ENCODE measurements at regions of chr11 and their contacts with region 1.

Region 1: GRCh38 chr11:12288212-12288930 is 89.0 kb upstream of the PARVA start:
- DNase-seq: peak; percentile 64
- H3K4me3 ChIP-seq: no peak overlapping the region
- H3K27me3 ChIP-seq: no peaks in the 10 kb centered on the region
- CTCF ChIP-seq: peak; percentile 98

Region 2: GRCh38 chr11:12251666-12252560 is 36.5 kb before region 1 on chr11:
- CTCF ChIA-PET with region 1: no interaction called
- POLR2A ChIA-PET with region 1: no interaction called
- DNase-seq: no peak
- H3K4me3 ChIP-seq: no peak overlapping the region
- H3K27me3 ChIP-seq: no peaks in the 10 kb centered on the region
- CTCF ChIP-seq: no peak

Region 3: DNA sequence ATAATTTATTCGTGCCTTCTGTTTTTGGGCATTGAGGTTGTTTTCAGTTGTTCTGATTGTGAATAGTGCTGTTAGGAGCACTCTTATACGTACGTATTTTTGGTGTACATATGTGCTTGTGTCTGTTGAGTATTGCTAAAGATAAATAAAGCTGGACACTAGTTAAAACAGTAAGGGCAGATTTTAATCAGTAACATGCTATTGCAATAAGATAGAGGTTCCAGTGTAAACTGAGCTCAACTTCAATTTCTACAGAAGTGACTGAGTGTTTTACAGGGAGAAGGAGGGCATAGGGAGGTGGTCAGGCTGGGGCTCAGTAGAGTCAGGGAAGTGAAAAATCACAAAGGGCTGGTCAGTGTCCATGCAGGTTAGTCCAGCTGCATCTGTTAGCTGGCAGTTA is 13.0 kb after region 1 on chr11:
- CTCF ChIA-PET with region 1: interaction called, 18 read pairs
- POLR2A ChIA-PET with region 1: no interaction called
- DNase-seq: no peak
- H3K4me3 ChIP-seq: no peak overlapping the region
- H3K27me3 ChIP-seq: no peaks in the 10 kb centered on the region
- CTCF ChIP-seq: no peak

Region 4: DNA sequence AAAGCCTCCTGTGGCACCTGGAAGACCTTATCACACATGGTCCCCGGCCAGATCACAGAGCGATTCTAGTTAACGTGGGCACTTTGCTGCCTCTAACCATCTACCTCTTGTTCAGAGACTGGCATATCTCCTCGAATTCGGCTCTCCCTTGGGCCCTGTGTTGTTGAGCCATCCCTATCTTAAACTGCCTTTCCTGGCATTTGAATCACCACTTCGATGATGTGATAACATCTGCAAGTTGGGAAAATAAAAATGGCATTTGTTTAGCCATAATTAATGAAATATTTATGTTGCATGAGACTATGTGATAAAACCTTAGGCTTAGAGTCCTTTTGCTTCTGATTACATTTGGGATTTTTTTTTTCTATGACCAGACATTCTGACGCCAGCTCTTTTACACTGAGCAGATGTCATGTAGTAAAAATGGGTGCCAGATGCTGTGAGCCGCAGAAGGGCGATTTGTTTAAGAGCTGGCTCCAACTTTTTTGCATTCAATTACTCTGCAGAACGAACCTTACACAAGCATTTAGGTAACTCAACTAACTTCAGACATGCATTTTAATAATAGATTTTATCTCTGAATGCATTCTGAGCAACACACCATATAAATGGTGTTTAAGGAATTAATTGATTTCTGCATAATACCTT is 30.5 kb after region 1 on chr11:
- CTCF ChIA-PET with region 1: interaction called, 16 read pairs
- POLR2A ChIA-PET with region 1: no interaction called
- DNase-seq: peak; percentile 84
- H3K4me3 ChIP-seq: no peak overlapping the region
- H3K27me3 ChIP-seq: no peaks in the 10 kb centered on the region; the same call in 1 of the 2 replicates
- CTCF ChIP-seq: no peak

Region 5: GRCh38 chr11:12331239-12331874 is 43.0 kb after region 1 on chr11:
- CTCF ChIA-PET with region 1: interaction called, 68 read pairs
- POLR2A ChIA-PET with region 1: interaction called, 8 read pairs
- DNase-seq: peak; percentile 40
- H3K4me3 ChIP-seq: no peak overlapping the region
- H3K27me3 ChIP-seq: no peaks in the 10 kb centered on the region
- CTCF ChIP-seq: peak; percentile 69

Region 6: DNA sequence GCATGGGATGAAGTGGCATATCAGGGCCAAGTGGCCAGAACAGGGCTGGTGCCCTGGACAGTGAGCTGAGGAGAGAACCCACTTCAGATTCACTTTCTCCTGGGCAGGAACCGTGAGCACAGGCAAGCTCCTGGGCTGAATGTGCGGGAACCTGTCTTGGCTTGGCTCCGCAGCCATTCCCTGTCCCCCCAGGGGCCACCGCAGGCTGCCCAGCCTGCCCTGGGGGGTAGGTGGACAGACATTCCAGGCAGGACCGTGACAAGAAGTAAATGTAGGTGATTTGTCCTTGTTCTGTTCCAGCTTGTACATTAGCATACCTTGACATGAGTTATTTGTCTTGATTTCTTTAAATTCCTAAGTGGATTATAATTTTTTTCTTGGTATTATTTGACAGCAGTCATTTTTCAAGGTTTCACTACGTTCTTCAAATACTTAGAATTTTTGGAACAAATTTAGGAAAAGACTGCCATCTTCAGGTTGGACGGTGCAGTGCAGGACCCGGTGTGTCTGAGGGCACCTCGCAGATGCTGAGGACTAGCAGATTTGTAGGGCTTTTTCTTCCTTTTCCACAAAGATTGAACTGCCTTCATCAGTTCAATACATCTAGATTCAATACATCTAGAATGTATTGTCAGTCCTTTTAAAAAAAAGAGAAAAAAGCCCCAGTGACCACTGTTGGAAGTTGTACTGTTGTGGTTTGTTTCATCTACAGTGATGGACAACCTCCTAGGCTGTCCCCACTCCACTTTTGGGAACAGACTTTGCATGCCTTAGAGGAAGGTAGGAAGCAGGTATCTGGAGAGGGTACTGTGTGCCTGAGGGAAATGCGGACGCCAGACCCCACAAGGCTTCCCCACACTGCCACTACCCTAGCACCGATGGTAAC is 605.7 kb after region 1 on chr11:
- CTCF ChIA-PET with region 1: interaction called, 15 read pairs
- POLR2A ChIA-PET with region 1: no interaction called
- DNase-seq: no peak
- H3K4me3 ChIP-seq: no peak overlapping the region
- H3K27me3 ChIP-seq: no peaks in the 10 kb centered on the region
- CTCF ChIP-seq: peak; percentile 83